GM12878 (cell line): ENCODE measurements at regions of chr2 and their contacts with region 1.

Region 1: DNA sequence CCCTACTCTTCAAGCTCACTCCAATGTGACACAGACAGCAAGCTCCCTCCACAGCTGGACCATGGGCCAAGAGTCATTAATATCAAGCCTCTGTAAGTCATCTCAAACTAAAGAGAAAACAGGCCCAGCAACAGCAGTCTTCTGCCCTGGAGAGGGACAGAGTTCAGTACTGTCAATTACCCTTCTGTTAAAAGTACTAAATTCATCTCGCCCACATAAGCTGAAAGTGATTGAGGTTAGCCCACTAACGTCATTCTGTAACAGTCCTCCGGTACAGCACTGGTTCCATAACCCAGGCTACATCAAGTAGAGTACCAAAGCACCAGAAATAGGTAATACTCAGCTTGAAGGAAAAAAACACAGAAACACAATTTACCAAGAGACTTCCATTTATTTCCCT is 25.9 kb downstream of the THADA start:
- DNase-seq: peak; percentile 57
- ATAC-seq: peak; percentile 93
- H3K4me3 ChIP-seq: no peak overlapping the region
- H3K27ac ChIP-seq: peak overlapping the region; percentile 50
- H3K4me1 ChIP-seq: peaks cover 24% of the 10 kb centered on the region
- H3K27me3 ChIP-seq: no peaks in the 10 kb centered on the region
- CTCF ChIP-seq: no peak
- EP300 ChIP-seq: peak; percentile 79 to 90; a peak in 2 of 4 replicates
- POLR2A ChIP-seq: no peak
- RAD21 ChIP-seq: no peak

Region 2: GRCh38 chr2:43559391-43560230 is 10.3 kb before region 1 on chr2:
- CTCF ChIA-PET with region 1: interaction called, 84 read pairs
- POLR2A ChIA-PET with region 1: interaction called, 15 read pairs
- RAD21 ChIA-PET with region 1: interaction called, 20 read pairs
- SMC1A ChIA-PET with region 1: interaction called, 66 read pairs
- in situ Hi-C with region 1: no loop called
- intact Hi-C with region 1: no loop called
- DNase-seq: peak; percentile 45
- ATAC-seq: peak; percentile 95
- H3K4me3 ChIP-seq: peak overlapping the region; percentile 27; the same call in 1 of the 2 replicates
- H3K27ac ChIP-seq: peak overlapping the region; percentile 50
- H3K4me1 ChIP-seq: peaks cover 19% of the 10 kb centered on the region
- H3K27me3 ChIP-seq: no peaks in the 10 kb centered on the region
- CTCF ChIP-seq: no peak
- EP300 ChIP-seq: peak; percentile 32 to 38; a peak in 2 of 4 replicates
- POLR2A ChIP-seq: no peak
- RAD21 ChIP-seq: no peak